Mammary epithelial cell (primary cell): ENCODE measurements at regions of chr5 and their contacts with region 1.

Region 1: DNA sequence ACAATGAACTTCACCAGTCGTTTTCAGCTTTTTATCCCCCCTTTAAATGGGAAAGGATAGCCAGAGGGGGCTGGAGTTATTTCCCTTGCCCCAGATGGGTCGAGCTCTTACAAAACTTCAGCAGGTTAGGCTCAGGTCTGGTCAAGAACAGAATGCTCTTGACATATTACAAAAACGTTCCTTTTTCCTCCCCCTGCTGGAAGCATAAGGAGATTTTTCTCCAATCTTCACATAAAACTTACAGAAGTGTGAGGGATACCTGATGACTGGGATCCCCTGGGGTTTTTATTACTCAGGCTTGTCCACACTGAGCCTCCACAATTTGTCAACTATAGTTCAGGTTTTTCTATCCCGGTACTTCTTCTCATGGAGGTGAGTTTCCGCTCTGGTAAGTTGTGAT is 60.8 kb downstream of the CSF2 start:
- DNase-seq: peak; percentile 73
- H3K4me3 ChIP-seq: no peak overlapping the region
- H3K27ac ChIP-seq: peak overlapping the region; percentile 8
- H3K4me1 ChIP-seq: peaks cover 24% of the 10 kb centered on the region
- H3K27me3 ChIP-seq: no peaks in the 10 kb centered on the region
- CTCF ChIP-seq: peak; percentile 18 to 44

Region 2: GRCh38 chr5:131460867-131461572 is 673.4 kb before region 1 on chr5:
- CTCF ChIA-PET with region 1: no interaction called
- dilution Hi-C with region 1: no loop called
- in situ Hi-C with region 1: no loop called
- intact Hi-C with region 1: no loop called
- DNase-seq: no peak
- H3K4me3 ChIP-seq: no peak overlapping the region
- H3K27ac ChIP-seq: no peak overlapping the region
- H3K4me1 ChIP-seq: peaks cover under 1% of the 10 kb centered on the region
- H3K27me3 ChIP-seq: no peaks in the 10 kb centered on the region
- CTCF ChIP-seq: no peak

Region 3: DNA sequence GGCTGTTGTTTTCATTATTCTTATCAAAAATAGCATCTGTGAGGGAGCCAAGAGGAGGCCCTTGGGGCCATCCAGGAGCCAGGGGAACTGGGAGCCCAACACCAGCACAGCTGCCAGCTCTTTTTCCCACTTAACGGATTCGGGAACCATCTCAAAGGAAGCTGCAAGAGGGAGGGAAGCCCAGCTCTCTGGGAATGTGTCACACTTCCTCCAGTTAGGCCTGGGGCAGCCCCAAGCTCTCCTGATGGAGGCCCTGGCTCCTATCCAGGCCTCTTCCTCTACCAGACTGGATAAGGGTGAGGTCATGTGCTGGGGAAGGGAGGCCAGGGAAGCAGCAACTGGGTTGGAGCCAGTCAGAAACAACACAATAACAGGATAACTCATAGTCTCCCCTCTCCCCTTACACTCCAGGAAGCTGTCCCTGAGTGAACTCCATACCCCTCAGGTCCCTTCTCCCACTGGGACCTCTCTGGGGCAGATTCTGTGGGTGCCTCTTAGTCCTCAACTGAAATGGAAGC is 48.0 kb before region 1 on chr5:
- CTCF ChIA-PET with region 1: no interaction called
- dilution Hi-C with region 1: no loop called
- in situ Hi-C with region 1: no loop called
- intact Hi-C with region 1: loop called (anchors 5 kb)
- DNase-seq: peak; percentile 94
- H3K4me3 ChIP-seq: no peak overlapping the region
- H3K27ac ChIP-seq: peak overlapping the region; percentile 39
- H3K4me1 ChIP-seq: peaks cover 46% of the 10 kb centered on the region
- H3K27me3 ChIP-seq: no peaks in the 10 kb centered on the region
- CTCF ChIP-seq: no peak

Region 4: GRCh38 chr5:132103332-132103951 is 30.9 kb before region 1 on chr5:
- CTCF ChIA-PET with region 1: no interaction called
- dilution Hi-C with region 1: no loop called
- in situ Hi-C with region 1: no loop called
- intact Hi-C with region 1: loop called (anchors 2 kb)
- DNase-seq: peak; percentile 94
- H3K4me3 ChIP-seq: no peak overlapping the region
- H3K27ac ChIP-seq: peak overlapping the region; percentile 96
- H3K4me1 ChIP-seq: peaks cover 46% of the 10 kb centered on the region
- H3K27me3 ChIP-seq: no peaks in the 10 kb centered on the region
- CTCF ChIP-seq: peak in 1 of 2 donors; percentile 26